HepG2 (cell line): ENCODE measurements at regions of chr19 and their contacts with region 1.

Region 1: GRCh38 chr19:50933640-50934039 is 19.2 kb downstream of the KLK5 start:
- DNase-seq: no peak
- ATAC-seq: no peak
- H3K4me3 ChIP-seq: no peak overlapping the region
- H3K27ac ChIP-seq: no peak overlapping the region
- H3K4me1 ChIP-seq: no peaks in the 10 kb centered on the region
- H3K27me3 ChIP-seq: no peaks in the 10 kb centered on the region
- CTCF ChIP-seq: no peak
- EP300 ChIP-seq: no peak
- POLR2A ChIP-seq: no peak
- RAD21 ChIP-seq: no peak

Region 2: GRCh38 chr19:51016798-51017683 is 83.4 kb after region 1 on chr19:
- CTCF ChIA-PET with region 1: interaction called, 10 read pairs
- POLR2A ChIA-PET with region 1: no interaction called
- in situ Hi-C with region 1: loop called (anchors 5 kb)
- intact Hi-C with region 1: loop called (anchors 10 kb)
- DNase-seq: peak; percentile 31
- ATAC-seq: peak; percentile 79
- H3K4me3 ChIP-seq: peak overlapping the region in 1 of 3 experiments; percentile 16; a peak in 1 of 6 replicates
- H3K27ac ChIP-seq: no peak overlapping the region
- H3K4me1 ChIP-seq: 0 out of 2 replicates have a peak, but pooled peaks cover 4% of the 10 kb centered on the region
- H3K27me3 ChIP-seq: peaks cover 3 to 31% of the 10 kb centered on the region in 2 experiments; a peak in 4 of 5 replicates
- CTCF ChIP-seq: peak; percentile 87
- EP300 ChIP-seq: no peak
- POLR2A ChIP-seq: no peak
- RAD21 ChIP-seq: peak; percentile 53; the same call in 1 of the 2 replicates

Region 3: DNA sequence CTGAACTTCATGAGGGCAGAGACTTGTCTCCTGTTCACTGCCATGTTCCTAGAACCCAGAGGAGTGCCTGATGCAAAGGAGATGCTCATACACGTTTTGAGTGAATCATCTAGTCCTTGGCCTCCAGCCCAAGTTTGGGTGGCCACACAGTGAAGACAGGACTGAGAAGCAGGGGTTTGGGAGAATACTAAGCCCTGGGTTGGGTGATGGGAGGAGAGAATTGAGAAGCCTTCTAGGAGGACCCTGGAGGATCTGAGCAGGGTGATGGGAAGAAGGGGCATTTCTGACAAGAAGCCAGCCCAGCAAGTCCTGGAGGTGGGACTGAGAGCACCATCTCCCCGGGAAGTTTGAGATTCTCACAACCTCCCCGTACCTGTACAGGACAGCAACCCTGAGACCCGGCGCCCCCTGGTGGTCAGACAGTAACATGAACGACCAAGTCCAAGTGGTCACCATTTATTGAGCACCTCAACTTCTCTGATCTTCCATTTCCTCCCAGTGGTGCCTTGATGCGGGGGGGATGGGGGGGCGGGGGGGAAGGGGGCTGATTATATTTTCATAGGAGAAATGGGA is 163.6 kb after region 1 on chr19:
- CTCF ChIA-PET with region 1: interaction called, 3 read pairs
- POLR2A ChIA-PET with region 1: no interaction called
- in situ Hi-C with region 1: loop called (anchors 25 kb)
- intact Hi-C with region 1: loop called (anchors 10 kb)
- DNase-seq: peak; percentile 34
- ATAC-seq: peak; percentile 76
- H3K4me3 ChIP-seq: no peak overlapping the region
- H3K27ac ChIP-seq: no peak overlapping the region
- H3K4me1 ChIP-seq: peaks cover 17% of the 10 kb centered on the region
- H3K27me3 ChIP-seq: no peaks in the 10 kb centered on the region; a peak in 1 of 5 replicates
- CTCF ChIP-seq: peak; percentile 70
- EP300 ChIP-seq: no peak
- POLR2A ChIP-seq: no peak
- RAD21 ChIP-seq: no peak

Region 4: DNA sequence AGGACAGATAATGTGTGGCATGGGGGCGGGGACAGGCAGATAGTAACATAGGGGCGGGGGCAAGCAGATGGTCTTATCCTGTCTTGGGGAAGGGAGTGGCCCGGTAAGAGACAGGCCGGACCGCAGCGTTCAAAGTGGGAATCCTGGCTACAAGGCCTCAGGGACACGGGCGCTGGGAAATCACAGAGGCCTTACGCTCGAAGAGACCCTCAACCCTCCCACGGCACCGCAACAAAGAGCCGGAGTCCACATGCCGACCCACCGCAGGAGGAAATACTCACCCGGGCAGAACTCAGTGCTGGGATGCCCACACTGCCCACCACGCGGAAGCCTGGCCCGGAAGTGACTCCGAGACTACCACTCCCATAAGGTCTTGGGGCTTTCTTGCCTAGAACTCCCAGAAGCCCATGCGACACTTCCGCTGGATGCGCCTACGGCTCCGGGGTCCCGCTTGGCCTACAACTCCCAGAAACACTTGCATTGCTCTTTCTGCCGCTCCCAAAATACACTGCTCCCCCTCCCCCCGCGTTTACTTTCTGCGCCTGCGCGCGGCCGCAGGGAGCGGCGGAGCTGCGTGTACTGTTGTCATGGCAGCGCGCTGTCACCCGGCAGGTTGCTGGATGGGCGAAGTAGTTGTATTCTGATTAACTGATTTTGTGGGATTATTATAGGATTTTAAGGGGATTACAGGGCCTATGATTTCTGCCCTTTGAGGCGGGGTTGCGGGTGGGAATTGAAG is 174.6 kb after region 1 on chr19 and contains the start of gene CTU1:
- CTCF ChIA-PET with region 1: no interaction called
- POLR2A ChIA-PET with region 1: no interaction called
- in situ Hi-C with region 1: no loop called
- intact Hi-C with region 1: loop called (anchors 10 kb)
- DNase-seq: peak; percentile 98
- ATAC-seq: peak; percentile 98
- H3K4me3 ChIP-seq: peak within 1 kb of the TSS; percentile 66 to 91 (median 90)
- H3K27ac ChIP-seq: peak within 1 kb of the TSS; percentile 52
- H3K4me1 ChIP-seq: peaks cover 15% of the 10 kb centered on the region
- H3K27me3 ChIP-seq: peaks cover 0 to 9% of the 10 kb centered on the region in 2 experiments; a peak in 1 of 5 replicates
- CTCF ChIP-seq: no peak
- EP300 ChIP-seq: no peak; a peak in 1 of 4 replicates
- POLR2A ChIP-seq: peak; percentile 80 to 86
- RAD21 ChIP-seq: no peak
- total RNA-seq, gene CTU1: 1.9 and 2.9 TPM in 2 replicates